Activated B cell treated with CpG ODN at 0.5 μM for 24 hours (primary cell): ENCODE measurements at regions of chr3 and their contacts with region 1.

Region 1: GRCh38 chr3:49093853-49094767 is at the start of gene QRICH1:
- DNase-seq: peak; percentile 95
- ATAC-seq: peak; percentile 78
- H3K4me3 Mint-ChIP-seq: peak within 1 kb of the TSS; percentile 97
- H3K27ac Mint-ChIP-seq: peak within 1 kb of the TSS; percentile 97
- H3K4me1 Mint-ChIP-seq: peaks cover 46% of the 10 kb centered on the region
- H3K27me3 Mint-ChIP-seq: no peaks in the 10 kb centered on the region
- CTCF ChIP-seq: no peak
- total RNA-seq, gene QRICH1: 142 and 155 TPM in 2 replicates

Region 2: GRCh38 chr3:48716982-48717746 is 376.9 kb before region 1 on chr3 and contains the start of gene IP6K2:
- CTCF ChIA-PET with region 1: no interaction called
- POLR2A ChIA-PET with region 1: interaction called, 7 read pairs
- intact Hi-C with region 1: loop called (anchors 2 kb)
- DNase-seq: peak; percentile 98
- ATAC-seq: peak; percentile 99
- H3K4me3 Mint-ChIP-seq: peak within 1 kb of the TSS; percentile 98
- H3K27ac Mint-ChIP-seq: peak within 1 kb of the TSS; percentile 94
- H3K4me1 Mint-ChIP-seq: peaks cover 37% of the 10 kb centered on the region
- H3K27me3 Mint-ChIP-seq: peaks cover 4% of the 10 kb centered on the region
- CTCF ChIP-seq: no peak
- total RNA-seq, gene IP6K2: 83.2 and 94.1 TPM in 2 replicates

Region 3: DNA sequence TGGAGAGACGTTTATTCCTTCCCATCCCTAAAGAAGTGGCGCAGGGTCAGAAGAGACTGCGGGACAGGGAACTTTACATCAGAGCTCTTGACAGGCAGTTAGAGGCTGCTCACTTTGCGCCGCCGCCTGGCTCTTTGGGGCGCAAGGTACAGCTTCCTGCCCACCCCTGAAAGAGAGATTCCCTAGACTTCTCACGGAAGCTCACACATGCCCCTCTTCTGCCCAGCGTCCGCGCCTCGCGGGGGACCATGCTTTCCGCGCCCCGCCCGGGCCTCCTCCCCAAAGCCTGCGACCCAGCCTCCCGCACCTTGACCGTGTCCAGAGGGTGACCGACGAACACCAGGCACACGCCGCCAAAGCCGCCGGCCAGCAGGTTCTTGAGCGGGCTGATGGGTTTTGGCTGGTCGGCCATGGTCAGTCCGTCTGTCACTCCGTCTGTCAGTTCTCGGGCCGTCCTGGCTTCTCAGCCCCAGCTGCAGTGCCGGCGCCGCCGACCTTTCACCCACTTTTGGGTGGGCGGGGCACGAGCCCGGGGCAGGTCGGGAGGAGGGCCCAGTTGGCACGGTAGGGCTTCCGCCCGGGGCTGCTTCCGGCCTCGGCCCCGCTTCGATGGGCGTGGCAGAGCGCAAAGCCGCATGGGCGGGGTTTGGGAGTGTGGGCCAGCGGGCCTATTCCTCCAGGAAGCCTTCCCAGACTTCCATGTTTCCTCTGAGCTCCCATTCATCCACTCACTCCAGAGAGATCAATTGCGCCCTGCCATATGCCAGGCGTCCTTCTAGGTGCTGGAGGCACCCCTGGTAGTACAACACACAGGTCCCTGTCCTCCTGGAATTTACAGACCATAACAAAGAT is 195.5 kb before region 1 on chr3 and contains the start of gene SLC25A20:
- CTCF ChIA-PET with region 1: no interaction called
- POLR2A ChIA-PET with region 1: no interaction called
- intact Hi-C with region 1: no loop called
- DNase-seq: peak; percentile 88
- ATAC-seq: peak; percentile 99
- H3K4me3 Mint-ChIP-seq: peak within 1 kb of the TSS; percentile 92
- H3K27ac Mint-ChIP-seq: peak within 1 kb of the TSS; percentile 83
- H3K4me1 Mint-ChIP-seq: peaks cover 38% of the 10 kb centered on the region
- H3K27me3 Mint-ChIP-seq: no peaks in the 10 kb centered on the region
- CTCF ChIP-seq: no peak
- total RNA-seq, gene SLC25A20: 9.9 and 11.0 TPM in 2 replicates

Region 4: DNA sequence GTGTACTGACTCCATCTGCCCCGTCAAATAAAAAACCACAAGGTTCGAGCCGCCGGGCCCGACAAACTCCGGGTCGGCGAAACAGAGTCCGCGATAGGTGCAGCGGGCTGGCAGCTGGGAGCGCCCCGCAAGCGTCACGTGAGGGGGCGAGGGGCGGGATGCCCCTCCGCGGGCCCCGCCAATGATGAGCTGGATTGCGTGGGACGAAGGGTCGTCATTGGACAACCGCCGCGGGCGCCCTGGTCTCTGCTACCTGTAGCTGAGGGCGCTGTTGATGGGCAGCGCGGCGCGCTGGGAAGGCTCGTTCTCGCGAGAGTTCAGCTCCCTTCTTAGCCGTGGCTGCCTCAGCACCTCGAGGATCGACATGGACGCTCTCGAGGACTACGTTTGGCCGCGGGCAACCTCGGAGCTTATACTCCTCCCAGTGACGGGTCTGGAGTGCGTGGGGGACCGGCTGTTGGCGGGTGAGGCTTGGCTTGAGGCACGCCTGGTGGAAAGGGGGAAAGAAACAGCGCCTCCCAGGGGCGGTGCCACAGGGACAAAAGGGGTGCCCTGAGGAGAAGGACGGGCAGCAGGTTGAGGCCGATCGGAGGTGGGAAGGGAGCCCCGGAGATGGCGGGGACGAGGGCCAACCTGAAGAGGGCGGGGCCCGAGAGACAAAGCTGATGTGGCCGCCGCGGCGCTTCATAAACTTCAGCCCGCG is 86.9 kb before region 1 on chr3 and contains the start of gene WDR6:
- CTCF ChIA-PET with region 1: interaction called, 10 read pairs
- POLR2A ChIA-PET with region 1: interaction called, 39 read pairs
- intact Hi-C with region 1: loop called (anchors 1 kb)
- DNase-seq: peak; percentile 91
- ATAC-seq: peak; percentile 89
- H3K4me3 Mint-ChIP-seq: peak within 1 kb of the TSS; percentile 100
- H3K27ac Mint-ChIP-seq: peak within 1 kb of the TSS; percentile 99
- H3K4me1 Mint-ChIP-seq: peaks cover 21% of the 10 kb centered on the region
- H3K27me3 Mint-ChIP-seq: no peaks in the 10 kb centered on the region
- CTCF ChIP-seq: no peak
- total RNA-seq, gene WDR6: 205 and 250 TPM in 2 replicates

Region 5: DNA sequence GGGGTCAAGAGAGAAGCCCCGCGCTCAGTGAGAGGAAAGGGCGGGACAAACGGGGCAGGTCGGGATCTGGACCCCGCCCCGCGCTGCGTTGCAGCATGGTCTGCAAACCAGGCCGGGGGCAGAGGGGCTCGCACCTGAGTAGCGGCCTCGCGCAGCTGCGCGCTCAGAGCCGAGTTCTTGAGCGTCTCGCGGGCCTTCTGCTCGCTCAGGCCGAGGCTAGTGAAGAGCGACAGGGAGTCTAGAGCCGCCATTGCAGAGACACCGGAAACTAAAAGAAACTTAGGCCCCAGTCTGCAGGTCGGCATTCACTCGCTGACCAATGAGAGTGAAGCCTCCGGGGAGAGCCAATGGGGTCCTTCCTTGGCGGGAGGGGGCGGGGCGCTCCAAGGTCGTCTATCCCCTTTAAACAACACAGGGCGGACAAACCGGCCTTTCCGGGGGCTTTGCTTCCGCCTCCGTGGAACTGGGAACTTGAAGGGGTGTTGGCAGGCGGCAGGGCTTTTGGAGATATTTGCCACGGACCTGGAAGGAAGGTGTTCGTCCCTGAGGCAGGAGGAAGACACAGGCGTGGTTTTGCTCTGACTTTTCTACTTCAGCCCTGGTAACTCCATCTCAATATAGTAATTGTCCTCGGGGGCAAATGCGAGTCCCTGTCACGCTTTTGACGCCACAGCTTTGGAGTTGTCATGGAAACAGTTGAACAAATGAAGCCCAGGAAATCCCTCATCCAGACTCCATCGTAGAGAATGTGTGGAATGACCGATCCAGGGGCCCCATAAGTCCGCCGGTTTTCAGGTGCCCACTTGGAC is 10.6 kb after region 1 on chr3 and contains the start of gene QARS1:
- CTCF ChIA-PET with region 1: interaction called, 5 read pairs
- POLR2A ChIA-PET with region 1: interaction called, 57 read pairs
- intact Hi-C with region 1: loop called (anchors 1 kb)
- DNase-seq: peak; percentile 77
- ATAC-seq: peak; percentile 99
- H3K4me3 Mint-ChIP-seq: peak within 1 kb of the TSS; percentile 98
- H3K27ac Mint-ChIP-seq: peak within 1 kb of the TSS; percentile 97
- H3K4me1 Mint-ChIP-seq: peaks cover 28% of the 10 kb centered on the region
- H3K27me3 Mint-ChIP-seq: no peaks in the 10 kb centered on the region
- CTCF ChIP-seq: no peak
- total RNA-seq, gene QARS1: 321 and 342 TPM in 2 replicates

Region 6: DNA sequence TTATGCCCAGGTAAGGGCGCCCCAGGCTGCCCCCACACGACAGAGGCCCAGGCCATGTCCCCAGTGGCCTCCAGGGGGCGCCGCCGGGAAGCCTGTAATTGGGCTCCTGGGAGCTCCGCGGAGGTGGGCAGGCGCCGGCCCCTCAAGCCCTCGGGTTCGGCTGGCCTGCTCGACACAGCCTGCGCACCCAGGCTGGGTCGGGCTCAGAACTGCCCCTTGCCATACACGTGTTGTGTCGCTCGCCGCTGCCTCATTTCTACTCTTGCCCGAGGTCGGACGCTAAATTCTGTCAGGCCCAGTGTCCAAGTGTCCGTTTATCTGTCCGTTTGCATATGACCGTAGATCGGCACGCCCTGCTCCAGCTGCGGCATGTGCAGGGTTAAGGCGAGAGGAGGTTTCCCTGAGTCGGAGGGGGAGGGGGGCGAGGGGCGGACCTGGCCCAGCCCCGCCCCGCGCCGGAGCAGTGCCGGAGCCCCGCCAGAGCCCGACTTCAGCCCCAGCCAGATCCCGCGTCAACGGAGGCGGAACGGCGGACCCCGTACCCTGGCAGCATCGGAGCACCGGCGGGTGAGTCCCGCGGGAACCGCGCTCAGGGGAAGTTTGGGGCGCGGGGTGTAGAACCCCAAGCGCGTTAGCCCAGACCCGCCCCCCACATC is 77.1 kb after region 1 on chr3 and contains the start of gene KLHDC8B:
- CTCF ChIA-PET with region 1: no interaction called
- POLR2A ChIA-PET with region 1: interaction called, 6 read pairs
- intact Hi-C with region 1: loop called (anchors 2 kb)
- DNase-seq: peak; percentile 76
- ATAC-seq: peak; percentile 81
- H3K4me3 Mint-ChIP-seq: peak within 1 kb of the TSS; percentile 87
- H3K27ac Mint-ChIP-seq: peak within 1 kb of the TSS; percentile 35
- H3K4me1 Mint-ChIP-seq: peaks cover 12% of the 10 kb centered on the region
- H3K27me3 Mint-ChIP-seq: peaks cover 2% of the 10 kb centered on the region
- CTCF ChIP-seq: peak; percentile 79
- total RNA-seq, gene KLHDC8B: 1.1 and 1.2 TPM in 2 replicates

Region 7: GRCh38 chr3:49445381-49445780 is 351.3 kb after region 1 on chr3:
- CTCF ChIA-PET with region 1: no interaction called
- POLR2A ChIA-PET with region 1: no interaction called
- intact Hi-C with region 1: loop called (anchors 10 kb)
- DNase-seq: no peak
- ATAC-seq: no peak
- H3K4me3 Mint-ChIP-seq: no peak overlapping the region
- H3K27ac Mint-ChIP-seq: peak overlapping the region; percentile 35
- H3K4me1 Mint-ChIP-seq: peaks cover 22% of the 10 kb centered on the region
- H3K27me3 Mint-ChIP-seq: no peaks in the 10 kb centered on the region
- CTCF ChIP-seq: no peak

Region 8: DNA sequence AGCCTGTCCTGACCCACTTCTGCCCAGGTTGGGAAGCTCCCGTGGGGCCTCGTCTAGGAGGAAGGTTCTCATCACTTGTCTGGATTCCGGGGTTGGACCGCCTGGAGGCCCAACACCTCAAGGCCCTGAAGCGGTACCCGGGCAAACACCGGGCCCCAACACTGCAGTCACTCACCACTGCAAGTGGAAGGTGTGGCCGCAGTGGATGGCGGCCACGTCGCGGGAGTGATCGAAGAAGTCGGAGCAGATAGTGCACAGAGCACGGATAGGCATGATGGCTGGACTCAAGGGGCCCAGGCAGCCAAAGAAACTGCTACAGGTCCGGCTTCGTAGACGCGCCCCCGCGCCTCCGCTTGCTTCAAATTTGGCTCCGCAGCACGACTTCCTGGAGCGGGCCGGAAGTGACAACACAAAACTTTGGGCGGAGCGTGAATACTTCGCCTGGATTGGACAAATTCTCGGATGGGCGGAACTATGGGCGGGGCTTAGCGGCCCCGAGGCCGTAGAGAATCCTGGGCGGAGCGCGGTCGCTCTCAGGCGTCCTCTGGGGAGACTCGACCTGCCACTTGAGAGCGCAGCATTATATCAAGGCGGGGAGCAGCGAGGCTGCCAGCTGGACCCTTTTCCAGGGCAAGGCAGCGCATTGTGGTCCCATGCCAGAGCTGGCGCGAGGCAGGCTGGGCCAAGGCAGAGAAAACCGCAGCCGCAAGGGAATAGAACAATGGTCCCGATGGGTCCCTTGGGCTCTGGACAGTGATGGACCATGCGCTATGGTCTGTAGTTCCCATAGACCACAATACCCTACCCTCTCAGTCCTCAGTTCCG is 762.3 kb after region 1 on chr3 and contains the start of gene TRAIP:
- CTCF ChIA-PET with region 1: no interaction called
- POLR2A ChIA-PET with region 1: no interaction called
- intact Hi-C with region 1: no loop called
- DNase-seq: peak; percentile 94
- ATAC-seq: peak; percentile 100
- H3K4me3 Mint-ChIP-seq: peak within 1 kb of the TSS; percentile 86
- H3K27ac Mint-ChIP-seq: peak within 1 kb of the TSS; percentile 80
- H3K4me1 Mint-ChIP-seq: peaks cover 15% of the 10 kb centered on the region
- H3K27me3 Mint-ChIP-seq: peaks cover 3% of the 10 kb centered on the region
- CTCF ChIP-seq: no peak
- total RNA-seq, gene TRAIP: 6.4 TPM in 2 replicates

Region 9: DNA sequence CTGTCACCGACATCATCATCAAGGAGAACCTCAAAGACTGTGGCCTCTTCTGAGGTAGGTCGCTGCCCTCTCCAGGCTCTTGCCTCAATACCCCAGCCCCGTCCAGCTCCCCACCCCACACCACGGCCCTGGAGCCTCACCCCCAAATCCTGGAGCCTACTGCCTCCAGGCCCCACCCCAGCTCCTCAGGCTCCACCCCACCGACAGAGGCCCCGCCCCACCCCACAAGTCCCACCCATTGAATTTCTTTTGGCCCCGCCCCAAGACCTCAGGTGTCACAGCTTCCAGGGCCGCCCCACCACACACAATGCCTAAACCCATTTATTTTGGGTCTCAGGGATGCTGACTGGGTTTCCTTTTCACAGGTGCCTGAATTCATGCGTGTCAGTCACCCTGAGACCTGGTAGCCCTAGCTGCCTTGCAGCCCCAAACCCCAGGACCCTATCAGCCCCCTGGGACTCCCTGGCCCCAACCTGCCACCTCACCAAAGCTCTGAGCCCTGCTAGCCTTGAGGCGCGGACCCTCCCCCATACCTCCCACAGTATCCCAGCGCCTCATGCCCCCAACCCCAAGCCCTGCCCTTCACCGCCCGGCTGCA is 1100.9 kb after region 1 on chr3:
- CTCF ChIA-PET with region 1: no interaction called
- POLR2A ChIA-PET with region 1: no interaction called
- intact Hi-C with region 1: no loop called
- DNase-seq: no peak
- ATAC-seq: peak; percentile 66
- H3K4me3 Mint-ChIP-seq: peak overlapping the region; percentile 46
- H3K27ac Mint-ChIP-seq: no peak overlapping the region
- H3K4me1 Mint-ChIP-seq: peaks cover 18% of the 10 kb centered on the region
- H3K27me3 Mint-ChIP-seq: peaks cover 15% of the 10 kb centered on the region
- CTCF ChIP-seq: no peak